CD8-positive, alpha-beta T cell (primary cell): ENCODE measurements at regions of chr2 and their contacts with region 1.

Region 1: DNA sequence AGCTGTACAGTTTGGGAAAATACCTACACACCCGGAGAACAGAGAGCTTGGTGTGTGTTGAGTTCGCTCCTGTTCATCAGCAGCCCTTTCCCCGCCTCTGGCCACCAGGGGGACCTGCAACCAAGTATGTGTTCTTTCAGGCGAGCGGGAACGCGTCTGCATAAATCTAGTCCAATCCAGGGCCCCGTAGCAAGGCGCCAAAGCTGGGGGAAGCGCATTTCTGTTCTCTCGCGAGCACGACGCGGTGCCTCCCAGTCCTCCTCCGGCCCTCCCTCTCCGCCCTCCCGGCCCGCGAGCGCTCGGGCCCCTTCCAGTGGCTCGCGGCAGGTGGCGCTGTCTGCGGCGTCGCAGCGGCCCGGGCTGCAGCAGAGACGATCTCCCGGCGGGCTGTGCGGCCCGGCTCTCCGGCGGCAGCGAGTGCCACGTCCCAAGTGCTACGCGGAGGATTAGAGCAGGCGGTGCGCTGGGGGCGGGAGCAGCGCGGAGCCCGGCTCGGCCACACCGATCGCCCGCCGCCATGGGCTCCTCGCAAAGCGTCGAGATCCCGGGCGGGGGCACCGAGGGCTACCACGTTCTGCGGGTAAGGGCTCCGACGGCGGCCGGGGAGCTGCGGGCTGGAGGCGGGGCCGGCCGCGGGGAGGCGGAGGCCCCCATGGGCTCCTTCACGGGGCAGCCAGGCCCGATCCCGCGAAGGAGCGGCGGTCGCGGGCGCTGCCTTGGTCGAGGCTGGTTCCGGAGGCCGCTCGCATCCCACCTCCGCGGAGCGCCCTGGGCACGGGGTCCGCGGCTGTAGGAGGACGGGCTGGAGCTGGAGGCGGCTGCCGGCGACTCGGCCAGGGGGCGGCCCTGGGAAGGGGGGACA is at the start of gene GORASP2:
- DNase-seq: peak; percentile 93 to 100 (median 97)
- ATAC-seq: peak; percentile 90
- H3K4me3 ChIP-seq: peak within 1 kb of the TSS; percentile 78 to 92
- H3K4me3 Mint-ChIP-seq: peak within 1 kb of the TSS; percentile 98
- H3K27ac ChIP-seq: peak within 1 kb of the TSS; percentile 68 to 80
- H3K27ac Mint-ChIP-seq: peak within 1 kb of the TSS; percentile 97
- H3K4me1 ChIP-seq: peaks cover 30% of the 10 kb centered on the region
- H3K4me1 Mint-ChIP-seq: peaks cover 35% of the 10 kb centered on the region
- H3K27me3 ChIP-seq: no peaks in the 10 kb centered on the region
- H3K27me3 Mint-ChIP-seq: no peaks in the 10 kb centered on the region
- CTCF ChIP-seq: peak; percentile 93
- total RNA-seq, gene GORASP2: 111 to 112 TPM

Region 2: DNA sequence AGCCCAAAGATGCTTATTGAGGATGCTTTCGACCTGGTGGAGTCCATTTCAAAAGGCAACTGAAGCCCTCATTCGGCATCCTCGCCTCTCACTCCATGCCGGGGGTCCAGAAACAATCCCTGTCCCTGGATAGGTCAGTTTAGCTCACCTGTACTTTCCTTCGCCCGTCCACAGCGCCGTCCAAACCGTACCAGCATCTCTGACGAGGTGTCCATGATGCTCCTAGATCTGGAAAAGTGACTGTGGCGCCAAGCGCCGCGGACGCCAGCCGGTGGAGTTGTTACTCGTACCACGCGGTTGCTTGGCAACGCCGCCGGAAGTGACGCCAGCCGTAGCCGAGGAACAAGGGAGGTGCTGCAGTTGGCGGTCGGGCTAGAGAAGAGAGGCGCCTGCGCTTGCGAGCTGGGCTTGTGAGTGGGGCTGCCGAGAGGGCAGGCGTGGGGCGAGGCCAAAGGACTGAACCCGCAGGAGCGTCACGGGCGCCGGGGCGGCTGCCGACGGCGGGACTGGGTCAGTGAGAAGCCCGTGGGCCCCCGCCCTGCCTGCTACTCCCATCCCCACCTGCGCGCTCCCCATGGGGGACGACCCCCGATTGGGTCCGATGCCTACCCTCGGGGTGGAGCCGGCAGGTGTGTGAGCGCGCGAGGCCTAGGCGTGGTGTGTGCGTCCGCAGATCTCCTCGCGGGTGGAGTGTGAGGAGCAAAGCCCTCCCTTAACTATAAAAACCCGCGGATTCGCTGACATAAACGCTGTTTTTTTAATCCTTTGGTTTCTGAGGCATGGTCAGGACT is 1234.7 kb before region 1 on chr2 and contains the starts of genes CFAP210 and PHOSPHO2:
- CTCF ChIA-PET with region 1: no interaction called
- POLR2A ChIA-PET with region 1: no interaction called
- intact Hi-C with region 1: loop called in 1 of 2 experiments (anchors 10 kb)
- DNase-seq: peak; percentile 98 to 100 (median 99)
- ATAC-seq: peak; percentile 89
- H3K4me3 ChIP-seq: peak within 1 kb of the TSS; percentile 49 to 69
- H3K4me3 Mint-ChIP-seq: peak within 1 kb of the TSS; percentile 95
- H3K27ac ChIP-seq: peak within 1 kb of the TSS; percentile 86 to 93
- H3K27ac Mint-ChIP-seq: peak within 1 kb of the TSS; percentile 99
- H3K4me1 ChIP-seq: peaks cover 11% of the 10 kb centered on the region
- H3K4me1 Mint-ChIP-seq: peaks cover 19% of the 10 kb centered on the region
- H3K27me3 ChIP-seq: no peaks in the 10 kb centered on the region
- H3K27me3 Mint-ChIP-seq: peaks cover 2% of the 10 kb centered on the region
- CTCF ChIP-seq: no peak
- total RNA-seq, gene CFAP210: 0.95 to 1.4 TPM
- total RNA-seq, gene PHOSPHO2: 2.3 TPM

Region 3: GRCh38 chr2:170950221-170950761 is 21.2 kb after region 1 on chr2:
- CTCF ChIA-PET with region 1: interaction called, 11 read pairs
- POLR2A ChIA-PET with region 1: interaction called, 6 read pairs
- intact Hi-C with region 1: no loop called
- DNase-seq: no peak
- ATAC-seq: no peak
- H3K4me3 ChIP-seq: no peak overlapping the region
- H3K4me3 Mint-ChIP-seq: no peak overlapping the region
- H3K27ac ChIP-seq: no peak overlapping the region
- H3K27ac Mint-ChIP-seq: no peak overlapping the region
- H3K4me1 ChIP-seq: peaks cover 6% of the 10 kb centered on the region
- H3K4me1 Mint-ChIP-seq: peaks cover 11% of the 10 kb centered on the region
- H3K27me3 ChIP-seq: no peaks in the 10 kb centered on the region
- H3K27me3 Mint-ChIP-seq: no peaks in the 10 kb centered on the region
- CTCF ChIP-seq: no peak

Region 4: DNA sequence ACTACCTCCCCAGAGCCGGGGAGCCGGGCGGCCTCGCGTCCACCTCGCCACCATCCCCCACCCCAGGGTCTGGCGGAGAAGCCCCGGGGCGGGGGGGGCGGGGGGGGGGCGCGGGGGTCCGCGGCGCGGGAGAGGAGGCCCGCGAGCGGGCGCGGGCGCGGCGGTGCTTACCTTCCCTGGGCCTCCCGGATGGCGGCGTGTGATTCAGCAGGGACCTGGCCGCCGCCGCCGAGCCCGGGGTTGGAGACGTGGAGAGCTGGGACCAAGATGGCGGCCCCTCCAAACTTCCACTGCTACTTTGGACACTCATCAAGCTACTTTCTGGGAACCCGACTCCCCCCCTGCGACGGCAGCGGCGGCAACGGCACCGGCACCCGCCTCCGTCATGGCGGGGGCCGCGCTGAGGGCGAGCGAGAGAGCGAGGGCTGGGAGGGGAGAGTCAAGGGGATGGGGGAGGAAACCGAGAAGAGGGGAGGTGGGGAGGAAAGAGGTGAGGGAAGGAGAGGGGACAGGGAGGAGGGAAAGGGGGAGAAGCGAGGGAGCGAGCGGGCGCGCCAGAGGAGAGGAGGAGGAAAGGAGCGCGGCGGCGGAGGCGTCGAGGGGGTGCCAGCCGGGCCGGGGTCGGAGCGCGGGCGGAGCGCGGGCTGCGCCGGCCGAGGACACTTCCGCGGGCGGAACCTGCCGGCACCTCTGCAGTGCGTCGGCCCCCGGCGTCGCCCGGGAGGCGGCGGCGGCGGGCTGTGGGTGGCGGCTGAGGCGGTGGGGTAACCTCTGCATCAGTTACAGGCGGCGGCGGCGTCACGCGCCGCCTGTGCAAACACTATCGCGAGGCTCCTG is 231.3 kb after region 1 on chr2 and contains the start of gene TLK1:
- CTCF ChIA-PET with region 1: interaction called, 6 read pairs
- POLR2A ChIA-PET with region 1: interaction called, 3 read pairs
- intact Hi-C with region 1: loop called (anchors 1 kb)
- DNase-seq: peak; percentile 55 to 88 (median 78)
- ATAC-seq: peak; percentile 56
- H3K4me3 ChIP-seq: peak within 1 kb of the TSS; percentile 75 to 92
- H3K4me3 Mint-ChIP-seq: peak within 1 kb of the TSS; percentile 90
- H3K27ac ChIP-seq: peak within 1 kb of the TSS; percentile 74 to 89
- H3K27ac Mint-ChIP-seq: peak within 1 kb of the TSS; percentile 94
- H3K4me1 ChIP-seq: peaks cover 44% of the 10 kb centered on the region
- H3K4me1 Mint-ChIP-seq: peaks cover 60% of the 10 kb centered on the region
- H3K27me3 ChIP-seq: no peaks in the 10 kb centered on the region
- H3K27me3 Mint-ChIP-seq: no peaks in the 10 kb centered on the region
- CTCF ChIP-seq: no peak
- total RNA-seq, gene TLK1: 95.7 to 107 TPM

Region 5: GRCh38 chr2:171687287-171688128 is 758.5 kb after region 1 on chr2 and contains the start of gene DYNC1I2:
- CTCF ChIA-PET with region 1: no interaction called
- POLR2A ChIA-PET with region 1: interaction called, 8 read pairs
- intact Hi-C with region 1: loop called in 1 of 2 experiments (anchors 10 kb)
- DNase-seq: peak; percentile 33 to 89 (median 69)
- ATAC-seq: peak; percentile 76
- H3K4me3 ChIP-seq: peak within 1 kb of the TSS; percentile 89 to 93
- H3K4me3 Mint-ChIP-seq: peak within 1 kb of the TSS; percentile 94
- H3K27ac ChIP-seq: peak within 1 kb of the TSS; percentile 45 to 52
- H3K27ac Mint-ChIP-seq: peak within 1 kb of the TSS; percentile 91
- H3K4me1 ChIP-seq: peaks cover 11% of the 10 kb centered on the region
- H3K4me1 Mint-ChIP-seq: peaks cover 25% of the 10 kb centered on the region
- H3K27me3 ChIP-seq: no peaks in the 10 kb centered on the region
- H3K27me3 Mint-ChIP-seq: no peaks in the 10 kb centered on the region
- CTCF ChIP-seq: no peak
- total RNA-seq, gene DYNC1I2: 6.9 to 9.1 TPM